Activated CD4-positive, alpha-beta T cell treated with anti-CD3 and anti-CD28 coated beads, Interleukin-2, amount 10 ng/mL, durations not matched to agents 24 days and 14 days (primary cell): ENCODE measurements at regions of chr17 and their contacts with region 1.

Region 1: DNA sequence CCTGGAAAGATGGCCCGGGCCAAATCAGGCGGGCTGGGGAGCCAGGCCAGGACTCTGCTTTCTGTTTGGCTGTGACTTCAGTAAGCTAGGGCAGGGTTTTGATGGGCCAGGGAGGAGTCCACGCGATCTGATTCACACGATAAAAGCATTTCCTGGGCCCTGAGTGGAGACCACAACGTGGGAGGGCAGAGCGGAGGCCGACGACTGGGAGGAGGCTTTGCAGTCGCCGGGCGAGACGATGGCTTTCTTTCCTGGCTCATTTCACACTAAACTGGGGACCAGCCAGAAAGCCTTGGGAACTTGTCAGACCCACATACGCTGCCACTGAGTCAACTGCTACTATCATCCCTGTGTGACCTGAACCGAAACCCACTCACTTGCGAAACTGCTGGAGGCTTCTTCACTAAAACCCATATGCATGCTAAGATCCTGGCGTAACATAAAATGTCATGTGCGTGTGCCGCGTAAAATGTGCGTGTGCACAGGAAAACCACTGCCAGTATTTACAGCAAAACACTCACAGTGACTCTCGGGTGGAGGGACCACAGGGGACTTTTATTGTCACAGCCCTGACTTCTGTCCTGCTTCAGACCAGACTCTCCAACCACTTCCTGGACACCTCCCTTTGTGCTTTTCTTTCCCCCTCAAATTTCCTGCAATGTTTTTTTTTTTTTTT is 14.2 kb upstream of the RHBDF2 start:
- DNase-seq: peak; percentile 95
- H3K4me3 Mint-ChIP-seq: peak overlapping the region; percentile 76
- H3K27ac Mint-ChIP-seq: peak overlapping the region; percentile 97
- H3K4me1 Mint-ChIP-seq: peaks cover 62% of the 10 kb centered on the region
- H3K27me3 Mint-ChIP-seq: no peaks in the 10 kb centered on the region

Region 2: DNA sequence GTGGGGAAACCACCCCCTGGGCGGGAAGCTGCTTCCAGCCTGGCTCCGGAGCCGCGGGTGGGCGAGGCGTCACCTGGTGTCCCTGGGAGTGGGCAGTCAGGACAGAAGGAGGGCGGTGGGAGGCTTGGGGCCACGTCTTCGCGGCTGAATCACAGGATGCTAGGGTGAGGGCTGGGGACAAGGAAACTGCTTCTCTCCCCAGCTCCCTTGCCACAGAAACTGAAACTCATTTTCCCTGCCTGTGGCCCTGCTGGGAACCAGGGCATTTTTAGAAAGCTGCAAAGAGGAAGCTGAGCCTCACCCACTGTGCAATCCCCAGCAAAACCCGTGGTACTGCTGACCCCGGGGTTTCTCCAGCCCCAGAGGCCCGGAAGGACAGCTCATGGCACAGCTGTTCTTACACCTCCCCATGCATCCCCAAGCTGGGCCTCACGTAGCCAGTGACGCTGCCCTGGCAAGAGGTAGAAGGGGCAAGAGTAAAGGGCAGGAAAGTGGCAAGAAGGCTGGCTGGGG is 22.4 kb before region 1 on chr17:
- intact Hi-C with region 1: loop called (anchors 1 kb)
- DNase-seq: peak; percentile 88
- H3K4me3 Mint-ChIP-seq: peak overlapping the region; percentile 93
- H3K27ac Mint-ChIP-seq: peak overlapping the region; percentile 99
- H3K4me1 Mint-ChIP-seq: peaks cover 53% of the 10 kb centered on the region
- H3K27me3 Mint-ChIP-seq: no peaks in the 10 kb centered on the region